ENCODE measurements at regions of chr1 and their contacts with region 1.

Region 1: GRCh38 chr1:7664147-7664892 is 106.8 kb upstream of the VAMP3 start:
- DNase-seq: no peak
- ATAC-seq: no peak
- H3K4me3 ChIP-seq: no peak overlapping the region
- H3K27ac ChIP-seq: no peak overlapping the region
- H3K4me1 ChIP-seq: peaks cover 7% of the 10 kb centered on the region
- H3K27me3 ChIP-seq: no peaks in the 10 kb centered on the region
- CTCF ChIP-seq: no peak
- POLR2A ChIP-seq: no peak

Region 2: DNA sequence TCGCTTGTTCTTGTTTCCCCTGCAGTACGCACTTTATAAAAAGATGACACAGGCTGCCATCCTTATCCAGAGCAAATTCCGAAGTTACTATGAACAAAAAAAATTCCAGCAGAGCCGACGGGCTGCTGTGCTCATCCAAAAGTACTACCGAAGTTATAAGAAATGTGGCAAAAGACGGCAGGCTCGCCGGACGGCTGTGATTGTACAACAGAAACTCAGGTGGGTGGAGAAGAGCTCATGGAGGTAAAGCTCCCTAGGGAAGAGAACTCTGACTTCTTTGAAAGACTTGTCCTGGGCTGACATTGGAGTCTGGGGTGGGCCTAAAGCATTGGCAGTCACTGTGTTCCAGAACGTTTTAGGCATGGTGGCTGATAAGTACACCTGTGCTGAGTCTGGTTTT is 86.9 kb after region 1 on chr1:
- intact Hi-C with region 1: loop called (anchors 2 kb)
- DNase-seq: no peak
- ATAC-seq: no peak
- H3K4me3 ChIP-seq: no peak overlapping the region
- H3K27ac ChIP-seq: no peak overlapping the region
- H3K4me1 ChIP-seq: peaks cover 9% of the 10 kb centered on the region
- H3K27me3 ChIP-seq: no peaks in the 10 kb centered on the region
- CTCF ChIP-seq: no peak
- POLR2A ChIP-seq: no peak

Region 3: DNA sequence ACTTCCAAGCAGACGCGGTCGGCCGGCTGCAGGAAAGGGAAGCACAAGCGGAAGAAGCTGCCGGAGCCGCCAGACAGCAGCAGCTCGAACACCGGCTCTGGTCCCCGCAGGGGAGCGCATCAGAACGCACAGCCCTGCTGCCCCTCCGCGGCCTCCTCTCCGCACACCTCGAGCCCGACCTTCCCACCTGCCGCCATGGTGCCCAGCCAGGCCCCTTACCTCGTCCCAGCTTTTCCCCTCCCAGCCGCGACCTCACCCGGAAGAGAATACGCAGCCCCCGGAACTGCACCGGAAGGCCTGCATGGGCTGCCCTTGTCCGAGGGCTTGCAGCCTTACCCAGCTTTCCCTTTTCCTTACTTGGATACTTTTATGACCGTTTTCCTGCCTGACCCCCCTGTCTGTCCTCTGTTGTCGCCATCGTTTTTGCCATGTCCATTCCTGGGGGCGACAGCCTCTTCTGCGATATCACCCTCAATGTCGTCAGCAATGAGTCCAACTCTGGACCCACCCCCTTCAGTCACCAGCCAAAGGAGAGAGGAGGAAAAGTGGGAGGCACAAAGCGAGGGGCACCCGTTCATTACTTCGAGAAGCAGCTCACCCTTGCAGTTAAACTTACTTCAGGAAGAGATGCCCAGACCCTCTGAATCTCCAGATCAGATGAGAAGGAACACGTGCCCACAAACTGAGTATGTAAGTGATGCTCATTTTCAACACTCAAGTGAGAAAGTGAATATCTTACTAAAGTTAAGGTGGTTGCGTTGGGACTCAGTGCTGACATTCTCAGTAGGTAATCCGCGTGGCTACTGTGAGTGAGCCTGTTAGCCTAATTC is 163.0 kb after region 1 on chr1:
- intact Hi-C with region 1: no loop called
- DNase-seq: no peak
- ATAC-seq: no peak
- H3K4me3 ChIP-seq: no peak overlapping the region
- H3K27ac ChIP-seq: no peak overlapping the region
- H3K4me1 ChIP-seq: no peaks in the 10 kb centered on the region
- H3K27me3 ChIP-seq: no peaks in the 10 kb centered on the region
- CTCF ChIP-seq: no peak
- POLR2A ChIP-seq: no peak